Mammary epithelial cell (primary cell): ENCODE measurements at regions of chr10 and their contacts with region 1.

Region 1: DNA sequence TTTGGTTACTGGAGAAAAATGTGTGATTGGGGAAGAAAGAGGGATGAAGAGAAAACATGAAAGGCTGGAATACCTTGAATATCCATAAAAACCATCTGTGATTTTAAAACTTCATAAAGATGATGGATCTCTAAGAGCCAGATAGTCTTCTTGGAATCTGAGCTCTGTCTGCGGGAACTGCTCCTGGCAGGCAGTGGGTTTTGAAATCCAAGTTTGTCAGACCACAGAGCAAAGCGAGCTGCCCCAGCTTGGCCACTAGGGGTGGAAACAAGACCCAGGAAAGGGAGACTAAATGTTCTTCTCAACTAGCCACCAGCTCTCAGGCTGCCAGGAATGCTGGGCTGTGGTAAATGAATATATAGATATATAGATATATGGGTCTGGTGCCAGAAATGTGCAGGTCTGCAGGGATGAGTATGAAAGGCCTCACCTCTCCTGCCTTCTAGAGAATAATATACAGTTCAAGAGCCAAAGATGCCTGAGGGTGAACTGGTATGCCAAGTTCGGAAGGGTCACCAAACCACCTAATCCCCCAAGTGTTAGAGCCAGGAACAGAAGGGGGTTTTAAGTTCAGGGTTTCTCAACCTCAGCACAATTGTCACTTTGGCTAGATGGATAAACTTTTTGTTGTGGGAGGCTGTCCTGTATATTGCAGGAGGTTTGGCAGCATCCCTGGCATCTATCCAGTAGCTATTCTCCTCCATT is 208.8 kb downstream of the KCNMA1 start:
- DNase-seq: peak; percentile 53
- H3K4me3 ChIP-seq: no peak overlapping the region
- H3K27ac ChIP-seq: no peak overlapping the region
- H3K4me1 ChIP-seq: no peaks in the 10 kb centered on the region
- H3K27me3 ChIP-seq: no peaks in the 10 kb centered on the region
- CTCF ChIP-seq: peak; percentile 58 to 64

Region 2: GRCh38 chr10:77082601-77083252 is 346.1 kb before region 1 on chr10:
- CTCF ChIA-PET with region 1: no interaction called
- dilution Hi-C with region 1: no loop called
- in situ Hi-C with region 1: no loop called
- intact Hi-C with region 1: no loop called
- DNase-seq: no peak
- H3K4me3 ChIP-seq: no peak overlapping the region
- H3K27ac ChIP-seq: no peak overlapping the region
- H3K4me1 ChIP-seq: peaks cover 4% of the 10 kb centered on the region
- H3K27me3 ChIP-seq: no peaks in the 10 kb centered on the region
- CTCF ChIP-seq: no peak

Region 3: DNA sequence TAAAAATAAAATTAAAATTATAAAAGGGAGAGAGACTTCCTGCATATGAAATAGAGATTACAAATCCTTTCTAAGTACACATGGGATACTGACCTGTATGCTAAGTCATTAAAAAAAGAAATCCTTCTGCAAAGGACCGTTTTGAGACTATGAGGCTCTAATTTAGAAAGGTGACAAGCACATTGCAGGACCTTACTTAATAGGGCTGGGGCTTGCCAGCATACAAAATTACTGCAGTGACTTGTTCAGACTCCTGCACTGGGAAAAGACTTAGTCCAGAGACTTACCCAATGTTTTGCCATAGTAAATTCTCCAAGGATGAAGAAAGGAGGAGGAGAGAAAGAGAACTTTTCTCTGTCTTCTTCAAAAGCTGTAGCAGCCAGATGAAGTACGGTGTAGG is 15.2 kb after region 1 on chr10:
- CTCF ChIA-PET with region 1: no interaction called
- dilution Hi-C with region 1: no loop called
- in situ Hi-C with region 1: no loop called
- intact Hi-C with region 1: loop called (anchors 1 kb)
- DNase-seq: no peak
- H3K4me3 ChIP-seq: no peak overlapping the region
- H3K27ac ChIP-seq: no peak overlapping the region
- H3K4me1 ChIP-seq: no peaks in the 10 kb centered on the region
- H3K27me3 ChIP-seq: no peaks in the 10 kb centered on the region
- CTCF ChIP-seq: no peak